GM12878 (cell line): ENCODE measurements at regions of chr6 and their contacts with region 1.

Region 1: GRCh38 chr6:78340755-78341154 is 526.6 kb upstream of the IRAK1BP1 start:
- DNase-seq: no peak
- ATAC-seq: no peak
- H3K4me3 ChIP-seq: no peak overlapping the region
- H3K27ac ChIP-seq: no peak overlapping the region
- H3K4me1 ChIP-seq: no peaks in the 10 kb centered on the region
- H3K27me3 ChIP-seq: no peaks in the 10 kb centered on the region
- CTCF ChIP-seq: no peak
- EP300 ChIP-seq: no peak
- POLR2A ChIP-seq: no peak
- RAD21 ChIP-seq: no peak

Region 2: DNA sequence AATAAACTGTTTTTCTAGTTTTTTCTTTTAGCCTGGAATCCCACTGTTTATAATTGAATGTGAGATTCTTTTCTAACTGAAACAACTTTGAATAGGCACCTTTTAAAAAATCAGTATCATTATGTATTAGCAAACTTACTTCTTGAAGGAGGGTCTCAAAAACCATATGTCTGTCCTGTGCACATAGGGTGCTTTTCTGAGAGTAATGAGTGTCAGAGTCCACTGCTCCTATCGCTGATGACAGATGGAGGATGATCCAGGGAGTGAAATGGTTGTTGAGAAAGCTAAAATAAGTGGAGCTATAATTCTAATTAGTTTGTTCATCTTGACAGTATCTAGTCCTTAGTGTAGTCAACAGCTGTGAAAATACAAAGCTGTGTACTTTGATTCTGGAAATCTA is 652.1 kb before region 1 on chr6:
- CTCF ChIA-PET with region 1: no interaction called
- POLR2A ChIA-PET with region 1: no interaction called
- RAD21 ChIA-PET with region 1: no interaction called
- SMC1A ChIA-PET with region 1: no interaction called
- in situ Hi-C with region 1: no loop called
- intact Hi-C with region 1: no loop called
- DNase-seq: no peak
- ATAC-seq: no peak
- H3K4me3 ChIP-seq: no peak overlapping the region
- H3K27ac ChIP-seq: no peak overlapping the region
- H3K4me1 ChIP-seq: no peaks in the 10 kb centered on the region
- H3K27me3 ChIP-seq: no peaks in the 10 kb centered on the region
- CTCF ChIP-seq: no peak
- EP300 ChIP-seq: no peak
- POLR2A ChIP-seq: no peak
- RAD21 ChIP-seq: no peak

Region 3: GRCh38 chr6:78253618-78254017 is 87.1 kb before region 1 on chr6:
- CTCF ChIA-PET with region 1: no interaction called
- POLR2A ChIA-PET with region 1: no interaction called
- RAD21 ChIA-PET with region 1: no interaction called
- SMC1A ChIA-PET with region 1: no interaction called
- in situ Hi-C with region 1: loop called (anchors 5 kb)
- intact Hi-C with region 1: no loop called
- DNase-seq: no peak
- ATAC-seq: peak; percentile 85
- H3K4me3 ChIP-seq: no peak overlapping the region
- H3K27ac ChIP-seq: no peak overlapping the region
- H3K4me1 ChIP-seq: no peaks in the 10 kb centered on the region
- H3K27me3 ChIP-seq: no peaks in the 10 kb centered on the region
- CTCF ChIP-seq: no peak
- EP300 ChIP-seq: no peak
- POLR2A ChIP-seq: no peak
- RAD21 ChIP-seq: no peak